Activated naive CD4-positive, alpha-beta T cell treated with anti-CD3 and anti-CD28 coated beads for 36 hours (primary cell): ENCODE measurements at regions of chr17 and their contacts with region 1.

Region 1: GRCh38 chr17:55750750-55751657 is at the start of gene PCTP:
- DNase-seq: peak; percentile 92
- H3K4me3 Mint-ChIP-seq: peak within 1 kb of the TSS; percentile 82
- H3K27ac Mint-ChIP-seq: no peak within 1 kb of the TSS
- H3K4me1 Mint-ChIP-seq: peaks cover 12% of the 10 kb centered on the region
- H3K27me3 Mint-ChIP-seq: peaks cover 18% of the 10 kb centered on the region
- total RNA-seq, gene PCTP: 8.8 to 10.3 TPM

Region 2: DNA sequence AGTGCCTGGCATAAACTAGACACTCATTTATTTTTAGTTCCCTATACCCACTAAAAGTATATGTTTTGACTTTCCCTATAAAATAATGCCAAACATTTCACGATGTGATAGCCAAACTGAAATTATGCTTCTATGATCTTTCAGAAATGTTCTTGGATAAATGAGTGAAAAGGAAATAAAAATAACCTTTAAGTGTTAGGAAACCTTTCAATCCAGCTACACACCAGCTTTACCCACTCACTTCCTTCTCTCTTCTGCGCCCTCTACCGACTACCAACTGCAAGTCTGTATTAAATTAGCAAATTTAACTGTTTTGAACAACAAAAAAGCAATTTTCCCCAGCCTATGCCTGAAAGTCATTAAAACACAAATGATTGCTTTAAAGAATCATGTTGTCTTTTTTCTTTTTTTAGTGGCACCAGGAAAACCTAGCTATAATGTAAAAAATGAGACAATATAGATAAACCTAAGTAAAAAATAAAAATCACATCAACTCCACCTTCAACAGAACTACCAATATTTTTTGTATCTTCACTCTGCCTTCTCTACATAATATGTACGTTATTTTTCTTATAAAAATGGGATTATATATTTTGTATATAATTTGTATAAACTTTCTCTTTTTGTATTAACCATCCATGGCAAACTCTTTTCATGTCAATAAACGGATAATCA is 15.1 kb before region 1 on chr17:
- CTCF ChIA-PET with region 1: interaction called, 22 read pairs
- intact Hi-C with region 1: loop called (anchors 1 kb)
- DNase-seq: peak; percentile 64
- H3K4me3 Mint-ChIP-seq: no peak overlapping the region
- H3K27ac Mint-ChIP-seq: no peak overlapping the region
- H3K4me1 Mint-ChIP-seq: peaks cover 30% of the 10 kb centered on the region
- H3K27me3 Mint-ChIP-seq: peaks cover 27% of the 10 kb centered on the region